Activated naive CD4-positive, alpha-beta T cell treated with anti-CD3 and anti-CD28 coated beads for 36 hours (primary cell): ENCODE measurements at regions of chr13 and their contacts with region 1.

Region 1: DNA sequence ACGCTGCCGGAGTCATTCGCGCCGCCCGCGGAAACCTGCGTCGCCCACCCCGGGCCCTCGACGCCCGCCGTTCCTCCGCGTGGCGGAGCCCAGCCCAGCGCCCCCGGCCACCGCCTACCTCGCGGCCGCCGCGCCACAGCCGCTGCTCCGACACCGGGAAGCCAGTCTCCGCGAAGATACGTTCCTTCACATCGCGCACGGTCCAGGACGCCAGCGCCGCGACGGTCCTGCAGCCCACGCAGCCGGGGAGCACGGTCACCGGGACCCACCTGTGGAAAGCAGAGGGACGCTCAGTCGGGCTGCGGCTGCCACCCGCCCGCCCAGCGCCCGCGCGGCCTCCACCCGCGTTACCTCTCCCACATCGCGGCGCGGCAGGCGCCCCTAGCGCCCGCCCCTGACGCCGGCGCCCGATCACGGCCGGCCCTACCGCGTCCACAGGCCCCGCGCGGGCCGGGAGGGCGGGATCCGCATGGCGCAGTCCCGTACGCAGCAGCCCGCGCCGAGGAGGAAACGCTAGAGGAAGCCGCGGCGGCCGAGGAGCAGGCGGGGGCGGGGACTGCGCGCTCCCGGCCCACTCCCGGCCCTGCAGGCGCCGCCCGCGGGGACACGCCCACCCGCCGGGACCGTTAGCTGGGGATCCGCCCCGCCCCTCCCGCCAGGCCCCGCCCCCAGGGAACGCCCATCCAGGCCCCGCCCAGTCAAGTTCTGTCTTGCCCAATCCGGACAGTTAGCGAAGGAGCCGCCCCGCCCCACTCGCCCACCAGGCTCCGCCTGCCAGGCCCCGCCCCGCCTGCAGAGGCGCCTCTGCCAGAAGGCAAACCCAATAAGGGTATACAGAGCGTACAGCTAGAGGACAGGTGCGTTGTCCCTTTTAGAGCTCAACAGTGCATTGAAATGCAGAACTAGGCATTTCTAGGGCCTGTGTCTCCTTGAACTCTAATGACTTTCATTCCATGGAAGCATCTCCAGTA is 58.2 kb downstream of the SACS start:
- DNase-seq: peak; percentile 97
- H3K4me3 Mint-ChIP-seq: peak overlapping the region; percentile 73
- H3K27ac Mint-ChIP-seq: peak overlapping the region; percentile 59
- H3K4me1 Mint-ChIP-seq: peaks cover 71% of the 10 kb centered on the region
- H3K27me3 Mint-ChIP-seq: no peaks in the 10 kb centered on the region

Region 2: DNA sequence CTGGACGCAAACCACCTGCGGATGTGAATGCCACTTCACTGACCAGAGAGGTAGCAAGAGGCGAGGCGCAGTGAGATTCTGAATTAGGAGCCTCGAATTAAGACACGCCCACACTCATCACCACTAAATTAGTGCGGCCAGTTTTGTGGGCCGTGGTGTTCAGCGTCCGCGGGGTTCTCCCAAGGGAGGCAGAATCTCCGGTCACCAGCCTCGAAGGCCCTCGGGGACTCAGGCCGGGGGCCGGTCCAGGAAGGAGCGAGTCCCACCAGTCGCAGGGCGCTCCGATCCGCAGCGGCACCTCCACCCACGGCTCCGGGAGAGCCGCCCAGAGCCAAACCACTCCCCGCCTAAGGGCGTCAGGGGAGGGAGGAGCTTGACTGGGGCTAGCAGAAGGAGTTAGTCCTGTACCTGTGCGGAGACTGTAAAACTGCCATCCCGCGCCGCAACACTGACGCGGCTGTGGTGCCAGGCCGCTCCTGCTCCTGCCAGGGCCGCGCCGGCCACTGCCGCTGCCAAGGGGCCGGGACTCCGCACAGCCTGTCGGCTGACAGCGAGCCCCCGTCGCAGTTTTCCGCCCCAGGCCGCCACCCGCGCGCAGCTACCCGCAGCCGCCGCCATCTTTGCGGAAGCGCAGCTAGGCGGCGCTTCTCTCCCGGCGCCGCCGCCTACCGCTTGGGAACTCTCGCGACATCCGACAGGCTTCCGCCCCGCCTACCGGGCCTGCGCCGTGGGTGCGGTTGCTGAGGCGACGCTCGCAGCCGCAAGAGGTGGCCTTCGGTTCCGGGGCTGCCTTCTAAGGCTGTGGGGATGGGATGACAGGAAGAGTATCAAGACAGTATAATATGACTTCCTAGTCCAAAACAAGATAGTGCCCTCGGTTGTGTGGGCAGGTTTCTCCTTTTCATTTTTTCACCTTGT is 1771.5 kb before region 1 on chr13 and contains the start of gene MICU2:
- CTCF ChIA-PET with region 1: no interaction called
- intact Hi-C with region 1: loop called (anchors 1 kb)
- DNase-seq: peak; percentile 97
- H3K4me3 Mint-ChIP-seq: peak within 1 kb of the TSS; percentile 84
- H3K27ac Mint-ChIP-seq: peak within 1 kb of the TSS; percentile 90
- H3K4me1 Mint-ChIP-seq: peaks cover 28% of the 10 kb centered on the region
- H3K27me3 Mint-ChIP-seq: peaks cover 3% of the 10 kb centered on the region
- total RNA-seq, gene MICU2: 27.5 to 28.2 TPM

Region 3: DNA sequence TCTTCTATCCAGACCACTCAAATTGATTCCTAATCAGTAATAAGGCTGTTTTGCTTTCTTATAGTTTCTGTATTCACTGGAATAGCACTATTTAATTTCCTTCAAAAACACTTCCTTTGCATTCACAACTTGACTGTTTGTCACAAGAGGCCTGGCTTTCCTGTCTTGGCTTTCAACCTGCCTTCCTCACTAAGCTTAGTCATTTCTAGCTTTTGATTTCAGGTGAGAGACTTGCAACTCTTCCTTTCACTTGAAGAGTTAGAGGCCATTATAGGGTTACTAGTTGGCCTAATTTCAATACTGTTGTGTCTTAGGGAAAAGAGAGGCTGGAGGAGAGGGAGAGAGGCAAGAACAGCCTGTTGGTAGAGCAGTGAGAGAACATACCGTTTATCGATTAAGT is 11.2 kb after region 1 on chr13:
- CTCF ChIA-PET with region 1: interaction called, 4 read pairs
- intact Hi-C with region 1: loop called (anchors 1 kb)
- DNase-seq: peak; percentile 39
- H3K4me3 Mint-ChIP-seq: no peak overlapping the region
- H3K27ac Mint-ChIP-seq: peak overlapping the region; percentile 20
- H3K4me1 Mint-ChIP-seq: peaks cover 40% of the 10 kb centered on the region
- H3K27me3 Mint-ChIP-seq: peaks cover 3% of the 10 kb centered on the region

Region 4: GRCh38 chr13:23579072-23579895 is 204.0 kb after region 1 on chr13:
- CTCF ChIA-PET with region 1: no interaction called
- intact Hi-C with region 1: loop called (anchors 1 kb)
- DNase-seq: peak; percentile 92
- H3K4me3 Mint-ChIP-seq: peak overlapping the region; percentile 76
- H3K27ac Mint-ChIP-seq: no peak overlapping the region
- H3K4me1 Mint-ChIP-seq: peaks cover 17% of the 10 kb centered on the region
- H3K27me3 Mint-ChIP-seq: peaks cover 38% of the 10 kb centered on the region

Region 5: GRCh38 chr13:23888658-23889614 is 513.6 kb after region 1 on chr13 and contains the start of gene MIPEP:
- CTCF ChIA-PET with region 1: no interaction called
- intact Hi-C with region 1: loop called (anchors 1 kb)
- DNase-seq: peak; percentile 89
- H3K4me3 Mint-ChIP-seq: peak within 1 kb of the TSS; percentile 81
- H3K27ac Mint-ChIP-seq: peak within 1 kb of the TSS; percentile 51
- H3K4me1 Mint-ChIP-seq: peaks cover 24% of the 10 kb centered on the region
- H3K27me3 Mint-ChIP-seq: no peaks in the 10 kb centered on the region
- total RNA-seq, gene MIPEP: 15.4 to 17.0 TPM

Region 6: GRCh38 chr13:24270639-24271141 is 895.4 kb after region 1 on chr13:
- CTCF ChIA-PET with region 1: no interaction called
- intact Hi-C with region 1: loop called (anchors 5 kb)
- DNase-seq: peak; percentile 78
- H3K4me3 Mint-ChIP-seq: peak overlapping the region; percentile 91
- H3K27ac Mint-ChIP-seq: peak overlapping the region; percentile 98
- H3K4me1 Mint-ChIP-seq: peaks cover 75% of the 10 kb centered on the region
- H3K27me3 Mint-ChIP-seq: no peaks in the 10 kb centered on the region

Region 7: DNA sequence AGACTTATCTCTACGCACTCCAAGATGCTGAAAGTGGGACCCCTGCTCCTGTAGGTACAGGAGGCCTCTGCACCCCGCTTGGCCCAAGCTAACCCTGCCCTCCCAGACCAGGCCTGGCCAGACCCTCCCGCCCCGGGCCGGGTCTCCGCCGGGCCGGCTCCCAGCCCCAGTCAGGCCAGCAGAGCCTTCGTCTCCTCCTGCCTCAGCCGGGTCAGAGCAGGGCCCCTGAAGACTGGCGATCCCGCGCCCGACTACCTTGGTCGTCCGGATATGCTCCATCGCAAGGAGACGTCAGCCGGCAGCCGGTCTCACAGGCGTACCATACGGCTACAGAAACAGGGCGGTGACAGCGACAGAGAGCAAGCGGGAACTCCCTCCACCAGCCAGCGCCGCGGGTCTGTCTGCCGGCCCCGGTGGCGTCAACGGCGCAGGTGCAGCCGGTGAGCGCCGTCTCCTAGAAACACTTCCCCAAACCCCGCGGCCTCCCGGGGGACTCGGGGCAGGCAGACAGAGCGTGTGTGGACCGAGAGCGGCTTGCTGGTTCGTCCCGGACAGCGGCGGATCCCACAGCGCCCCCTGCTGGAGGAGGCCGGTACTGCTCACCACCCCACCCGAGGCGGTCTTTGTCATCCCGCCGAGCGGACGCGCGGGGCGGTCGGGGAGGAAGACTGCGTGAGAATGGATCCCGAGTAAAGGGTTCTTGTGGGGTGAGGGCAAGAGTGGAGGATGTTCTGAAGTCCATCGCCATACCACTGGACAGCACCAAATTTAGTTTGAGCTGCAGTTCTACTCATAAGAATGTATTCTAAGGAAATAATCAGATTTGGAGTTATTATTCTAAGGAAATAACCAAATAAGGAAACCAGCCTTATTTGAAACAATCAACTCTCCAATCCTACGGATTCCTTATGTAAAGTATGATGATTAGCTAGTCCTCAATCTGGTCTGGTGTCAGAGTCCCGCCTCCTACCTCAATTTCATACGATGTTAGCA is 1912.0 kb after region 1 on chr13 and contains the start of gene MTMR6:
- CTCF ChIA-PET with region 1: no interaction called
- intact Hi-C with region 1: loop called (anchors 10 kb)
- DNase-seq: peak; percentile 95
- H3K4me3 Mint-ChIP-seq: peak within 1 kb of the TSS; percentile 93
- H3K27ac Mint-ChIP-seq: peak within 1 kb of the TSS; percentile 92
- H3K4me1 Mint-ChIP-seq: peaks cover 40% of the 10 kb centered on the region
- H3K27me3 Mint-ChIP-seq: peaks cover 3% of the 10 kb centered on the region
- total RNA-seq, gene MTMR6: 5.5 to 5.7 TPM